Activated CD4-positive, alpha-beta T cell treated with anti-CD3 and anti-CD28 coated beads for 36 hours (primary cell): ENCODE measurements at regions of chr3 and their contacts with region 1.

Region 1: GRCh38 chr3:128663151-128663550 is 12.5 kb upstream of the RPN1 start:
- DNase-seq: no peak
- ATAC-seq: no peak
- H3K4me3 Mint-ChIP-seq: no peak overlapping the region
- H3K27ac Mint-ChIP-seq: no peak overlapping the region
- H3K4me1 Mint-ChIP-seq: peaks cover 2% of the 10 kb centered on the region
- H3K27me3 Mint-ChIP-seq: no peaks in the 10 kb centered on the region

Region 2: DNA sequence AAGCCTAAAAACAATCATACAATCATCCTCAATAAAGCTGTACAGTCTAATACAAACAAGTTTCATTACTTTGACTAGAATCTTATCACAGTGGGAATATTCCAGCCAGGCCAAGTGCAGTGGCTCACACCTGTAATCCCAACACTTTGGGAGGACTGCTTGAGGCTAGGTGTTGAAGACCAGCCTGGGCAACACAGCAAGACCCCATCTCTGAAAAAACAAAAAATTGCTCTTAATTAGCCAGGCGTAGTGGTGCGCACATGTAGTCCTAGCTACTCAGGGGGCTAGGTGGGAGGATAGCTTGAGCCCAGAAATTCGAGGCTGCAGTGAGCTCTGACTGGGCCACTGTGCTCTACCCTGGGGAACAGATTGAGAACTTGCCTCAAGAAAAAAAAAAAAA is 15.8 kb before region 1 on chr3:
- CTCF ChIA-PET with region 1: no interaction called
- POLR2A ChIA-PET with region 1: no interaction called
- intact Hi-C with region 1: no loop called
- DNase-seq: no peak
- ATAC-seq: no peak
- H3K4me3 Mint-ChIP-seq: no peak overlapping the region
- H3K27ac Mint-ChIP-seq: peak overlapping the region; percentile 3
- H3K4me1 Mint-ChIP-seq: peaks cover 37% of the 10 kb centered on the region
- H3K27me3 Mint-ChIP-seq: no peaks in the 10 kb centered on the region

Region 3: DNA sequence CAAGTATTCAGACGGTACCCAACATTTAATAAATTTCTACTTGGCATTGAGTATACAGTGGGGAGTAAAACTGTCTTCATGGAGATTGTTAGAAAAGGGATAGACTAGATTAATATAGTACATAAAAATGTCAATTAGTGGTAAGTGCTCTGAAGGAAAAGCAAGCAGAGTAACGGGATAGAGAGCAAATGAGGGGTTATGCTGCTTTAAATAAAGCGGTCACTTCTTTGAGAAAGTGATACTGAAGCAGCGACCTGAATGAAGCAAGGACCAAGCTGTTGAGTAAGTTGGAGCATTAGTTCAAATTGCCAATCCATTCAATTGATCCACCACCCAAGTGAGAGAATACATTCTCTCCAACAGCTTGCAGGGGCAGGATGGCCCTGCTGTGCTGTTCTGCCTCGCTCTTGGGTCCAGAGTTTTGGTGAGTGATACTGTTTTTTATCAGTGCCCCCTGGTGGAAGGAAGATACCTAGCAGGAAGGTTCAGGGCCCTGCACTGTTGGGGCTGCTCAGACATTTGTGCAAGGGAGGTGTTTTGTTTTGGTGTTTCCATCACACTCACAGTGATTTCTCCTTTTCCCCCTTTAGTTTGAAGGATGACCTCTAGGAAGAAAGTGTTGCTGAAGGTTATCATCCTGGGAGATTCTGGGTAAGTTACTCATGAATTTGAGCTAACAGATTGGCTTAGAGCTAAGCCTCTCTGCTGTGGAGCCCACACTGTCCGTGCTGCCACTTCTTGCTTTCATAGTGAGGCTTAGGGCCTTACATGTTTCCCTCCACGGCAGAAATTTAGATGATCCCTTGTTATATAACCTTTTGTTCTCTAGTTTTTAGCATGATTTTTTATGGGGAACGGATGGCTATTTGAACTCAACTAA is 131.9 kb after region 1 on chr3:
- CTCF ChIA-PET with region 1: no interaction called
- POLR2A ChIA-PET with region 1: no interaction called
- intact Hi-C with region 1: no loop called
- DNase-seq: peak; percentile 76
- ATAC-seq: peak; percentile 68
- H3K4me3 Mint-ChIP-seq: peak overlapping the region; percentile 37
- H3K27ac Mint-ChIP-seq: peak overlapping the region; percentile 95
- H3K4me1 Mint-ChIP-seq: peaks cover 91% of the 10 kb centered on the region
- H3K27me3 Mint-ChIP-seq: no peaks in the 10 kb centered on the region

Region 4: DNA sequence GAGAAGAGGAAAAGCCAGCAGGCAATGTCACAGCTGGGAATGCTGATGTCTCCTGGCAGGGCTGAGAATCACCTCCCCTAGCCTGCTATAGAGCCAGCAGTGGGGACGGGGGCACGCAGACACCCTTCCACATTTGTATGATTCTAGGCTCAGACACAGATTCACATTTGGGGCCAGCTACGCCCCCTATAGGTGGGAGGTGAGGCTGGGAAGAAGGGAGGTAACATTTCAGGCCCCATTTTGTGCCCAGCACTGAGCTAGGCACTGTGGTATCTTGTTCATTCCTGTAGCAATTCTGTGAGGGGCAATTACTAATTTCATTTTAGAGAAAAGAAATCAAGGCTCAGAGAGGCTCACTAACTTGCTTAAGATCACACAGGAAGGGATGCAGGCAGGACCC is 200.4 kb after region 1 on chr3:
- CTCF ChIA-PET with region 1: no interaction called
- POLR2A ChIA-PET with region 1: no interaction called
- intact Hi-C with region 1: loop called in 1 of 2 experiments (anchors 5 kb)
- DNase-seq: peak; percentile 60
- ATAC-seq: peak; percentile 62
- H3K4me3 Mint-ChIP-seq: no peak overlapping the region
- H3K27ac Mint-ChIP-seq: no peak overlapping the region
- H3K4me1 Mint-ChIP-seq: no peaks in the 10 kb centered on the region
- H3K27me3 Mint-ChIP-seq: no peaks in the 10 kb centered on the region